ENCODE measurements at regions of chr2 and their contacts with region 1.

Region 1: DNA sequence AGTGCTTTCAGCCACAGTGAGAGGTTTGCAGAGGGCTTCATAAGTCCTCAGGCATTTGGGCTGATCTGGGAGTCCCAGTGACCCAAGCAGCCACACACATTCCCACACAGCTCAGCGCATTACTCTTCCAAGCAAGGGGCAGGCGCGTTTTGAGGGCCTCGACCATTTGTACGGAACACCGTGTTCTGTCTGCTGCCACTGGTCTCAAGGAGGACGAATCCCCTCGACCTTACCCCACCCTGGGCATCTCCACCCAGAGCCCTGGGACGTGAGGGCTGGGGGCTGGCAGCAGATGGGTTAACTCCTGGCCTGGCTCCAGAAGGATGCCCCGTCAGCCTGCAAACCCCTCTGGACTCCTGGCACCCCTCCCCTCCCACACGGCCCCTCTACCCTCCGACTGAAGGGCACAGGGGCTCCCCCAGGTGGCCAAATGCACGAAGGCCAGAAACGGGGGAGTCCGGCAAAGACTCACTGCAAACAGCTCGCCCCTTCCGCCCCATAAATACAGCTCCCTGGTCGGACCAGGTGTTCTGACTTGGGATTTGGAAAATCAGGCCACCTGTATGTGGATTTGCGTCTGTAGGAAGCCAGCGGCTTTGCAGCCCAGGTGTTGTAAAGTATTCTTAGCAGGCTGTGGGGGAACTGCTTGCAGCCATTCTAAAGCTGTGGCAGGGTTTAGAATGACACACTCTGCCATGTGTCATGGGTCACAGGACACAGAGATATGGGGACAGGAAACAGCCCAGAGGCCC is 33.6 kb upstream of the PTMA start:
- DNase-seq: peak; percentile 82
- ATAC-seq: peak; percentile 61

Region 2: GRCh38 chr2:231068525-231069222 is 606.1 kb before region 1 on chr2:
- intact Hi-C with region 1: no loop called
- DNase-seq: no peak
- ATAC-seq: no peak

Region 3: DNA sequence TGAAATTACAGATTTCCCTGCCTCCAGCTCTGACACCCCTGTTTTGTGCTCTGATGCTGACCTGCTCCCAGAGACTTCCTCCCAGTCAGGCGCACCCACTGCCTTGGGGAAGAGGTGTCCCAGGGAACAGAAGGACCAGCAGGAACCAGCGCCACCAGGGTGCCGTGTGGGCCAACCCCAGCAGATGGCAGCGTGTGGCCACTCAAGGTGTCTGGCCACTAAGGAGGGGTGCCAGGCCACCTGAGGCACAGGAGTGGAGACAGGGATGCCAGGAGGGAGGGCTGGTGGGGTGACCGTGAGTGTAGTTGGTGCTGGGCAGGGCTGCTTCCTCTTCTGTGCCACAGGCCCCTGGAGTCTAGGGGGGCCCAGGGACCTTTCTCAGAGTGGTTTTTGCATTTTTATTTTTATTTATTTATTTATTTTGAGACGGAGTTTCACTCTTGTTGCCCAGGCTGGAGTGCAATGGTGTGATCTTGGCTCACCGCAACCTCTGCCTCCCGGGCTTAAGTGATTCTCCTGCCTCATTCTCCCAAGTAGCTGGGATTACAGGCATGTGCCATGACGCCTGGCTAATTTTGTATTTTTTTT is 26.1 kb before region 1 on chr2:
- intact Hi-C with region 1: loop called (anchors 2 kb)
- DNase-seq: peak; percentile 84
- ATAC-seq: peak; percentile 69

Region 4: DNA sequence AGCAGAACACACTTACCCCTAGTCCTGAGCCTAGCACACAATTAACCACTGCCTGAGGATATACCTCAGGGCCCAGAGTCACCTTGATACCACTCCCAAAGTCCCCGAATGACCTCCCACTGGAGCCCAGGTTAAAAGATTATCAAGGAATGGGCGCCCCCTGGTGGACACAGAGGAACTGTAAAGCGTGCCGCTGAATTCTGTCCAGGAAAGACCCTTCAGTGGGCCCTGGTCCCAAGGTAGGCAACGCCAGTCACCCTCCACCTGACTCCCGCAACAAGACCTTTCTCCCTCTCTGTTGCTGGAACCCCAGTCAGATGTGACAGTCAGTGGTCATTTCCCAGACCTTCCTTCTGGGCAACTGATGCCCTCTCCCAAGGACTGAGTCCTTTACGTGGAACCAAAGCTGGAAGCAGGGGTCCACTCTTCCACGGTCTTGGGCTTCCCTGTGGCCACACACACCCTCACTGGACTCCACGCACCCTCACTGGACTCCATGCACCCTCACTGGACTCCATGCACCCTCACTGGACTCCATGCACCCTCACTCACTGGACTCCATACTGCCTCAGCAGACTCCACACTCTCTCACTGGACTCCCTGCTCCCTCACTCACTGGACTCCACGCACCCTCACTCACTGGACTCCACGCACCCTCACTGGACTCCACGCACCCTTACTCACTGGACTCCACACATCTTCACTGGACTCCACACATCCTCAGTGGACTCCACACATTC is 40.7 kb after region 1 on chr2:
- intact Hi-C with region 1: loop called (anchors 1 kb)
- DNase-seq: peak; percentile 85
- ATAC-seq: peak; percentile 20

Region 5: DNA sequence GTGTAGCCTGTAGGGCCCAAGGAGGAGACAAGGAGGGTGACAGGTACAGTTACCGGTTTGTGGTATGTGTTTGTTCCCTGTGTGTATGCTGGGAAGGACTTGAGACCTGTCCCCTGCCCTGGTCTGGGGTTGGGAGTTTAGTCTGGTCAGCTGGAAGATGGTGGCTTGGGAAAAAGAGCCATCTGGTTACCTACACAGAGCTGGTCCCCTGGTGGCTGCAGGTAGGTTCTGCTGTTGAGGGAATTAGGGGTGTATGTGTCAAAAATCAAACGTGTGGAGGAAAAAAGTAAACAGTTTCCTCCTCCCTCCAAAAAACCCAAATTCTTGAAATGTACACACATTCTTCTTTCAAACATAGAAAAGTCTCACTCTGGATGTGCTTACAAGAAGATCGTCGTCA is 57.8 kb after region 1 on chr2:
- intact Hi-C with region 1: no loop called
- DNase-seq: no peak
- ATAC-seq: no peak